ENCODE measurements at regions of chr7 and their contacts with region 1.

Region 1: DNA sequence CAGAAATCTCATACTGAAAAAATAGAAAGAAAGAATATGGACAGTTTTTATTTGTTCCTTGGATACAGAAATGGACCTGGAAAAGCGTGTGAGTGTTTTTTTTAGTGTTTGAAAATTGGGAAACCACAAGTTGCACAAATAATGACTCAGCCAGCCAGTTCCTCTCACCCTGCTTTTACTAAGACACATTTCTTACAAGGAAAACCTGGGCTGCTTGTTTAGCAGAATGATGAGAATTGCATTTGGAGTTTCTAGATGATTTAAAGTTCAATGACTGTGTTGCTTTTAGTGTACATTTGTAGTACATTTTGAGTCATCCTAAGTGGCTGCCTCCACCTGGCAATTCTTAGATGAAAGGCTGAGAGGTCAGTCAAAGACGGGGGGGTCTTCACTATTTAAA is 218.7 kb downstream of the ABCA13 start:
- DNase-seq: no peak
- ATAC-seq: no peak
- H3K4me3 ChIP-seq: no peak overlapping the region
- H3K27ac ChIP-seq: no peak overlapping the region
- H3K4me1 ChIP-seq: no peaks in the 10 kb centered on the region
- H3K27me3 ChIP-seq: no peaks in the 10 kb centered on the region
- CTCF ChIP-seq: no peak
- POLR2A ChIP-seq: no peak

Region 2: GRCh38 chr7:48424731-48425130 is 34.8 kb after region 1 on chr7:
- in situ Hi-C with region 1: no loop called
- intact Hi-C with region 1: no loop called
- DNase-seq: no peak
- ATAC-seq: no peak
- H3K4me3 ChIP-seq: no peak overlapping the region
- H3K27ac ChIP-seq: no peak overlapping the region
- H3K4me1 ChIP-seq: no peaks in the 10 kb centered on the region
- H3K27me3 ChIP-seq: no peaks in the 10 kb centered on the region
- CTCF ChIP-seq: no peak
- POLR2A ChIP-seq: no peak

Region 3: DNA sequence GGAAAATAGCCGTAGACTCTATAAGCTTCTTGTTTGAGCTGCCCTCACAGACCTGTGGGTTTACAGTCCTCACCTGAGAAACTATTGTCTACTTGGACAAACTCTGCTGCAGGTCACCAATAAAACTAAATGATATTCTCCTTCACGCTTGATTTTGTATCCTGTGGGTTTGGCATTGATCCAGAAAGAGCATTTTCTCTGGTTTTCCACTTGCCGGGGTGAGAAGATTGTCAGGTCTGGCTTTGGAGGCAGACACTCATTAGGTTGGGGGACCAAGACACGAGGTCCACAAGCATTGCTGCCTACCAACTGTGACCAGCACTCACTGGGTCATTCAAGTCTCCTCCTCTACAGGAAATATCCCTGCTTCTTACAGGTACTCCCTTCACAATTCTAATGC is 602.8 kb after region 1 on chr7:
- in situ Hi-C with region 1: no loop called
- intact Hi-C with region 1: loop called (anchors 10 kb)
- DNase-seq: no peak
- ATAC-seq: no peak
- H3K4me3 ChIP-seq: no peak overlapping the region
- H3K27ac ChIP-seq: no peak overlapping the region
- H3K4me1 ChIP-seq: no peaks in the 10 kb centered on the region
- H3K27me3 ChIP-seq: no peaks in the 10 kb centered on the region
- CTCF ChIP-seq: no peak
- POLR2A ChIP-seq: no peak

Measured in gastrocnemius medialis (tissue), 4 donors.